ENCODE measurements at regions of chr2 and their contacts with region 1.

Region 1: GRCh38 chr2:69724540-69725159 is 17.3 kb upstream of the ANXA4 start:
- DNase-seq: peak; percentile 91
- H3K4me3 ChIP-seq: peak overlapping the region in 3 of 4 donors; percentile 16 to 25 (median 25)
- H3K27ac ChIP-seq: no peak overlapping the region
- H3K4me1 ChIP-seq: peaks cover 0 to 10% (median 4%) of the 10 kb centered on the region in 4 donors
- H3K27me3 ChIP-seq: no peaks in the 10 kb centered on the region
- CTCF ChIP-seq: peak; percentile 85 to 96 (median 95)
- EP300 ChIP-seq: no peak
- POLR2A ChIP-seq: no peak

Region 2: GRCh38 chr2:69554981-69555380 is 169.7 kb before region 1 on chr2:
- intact Hi-C with region 1: no loop called
- DNase-seq: no peak
- H3K4me3 ChIP-seq: no peak overlapping the region
- H3K27ac ChIP-seq: peak overlapping the region in 1 of 4 donors; percentile 22
- H3K4me1 ChIP-seq: peaks cover 0 to 6% (median 3%) of the 10 kb centered on the region in 4 donors
- H3K27me3 ChIP-seq: no peaks in the 10 kb centered on the region
- CTCF ChIP-seq: no peak
- EP300 ChIP-seq: no peak
- POLR2A ChIP-seq: no peak

Region 3: GRCh38 chr2:69741619-69742466 is 17.2 kb after region 1 on chr2 and contains the start of gene ANXA4:
- intact Hi-C with region 1: no loop called
- DNase-seq: peak; percentile 91
- H3K4me3 ChIP-seq: peak within 1 kb of the TSS; percentile 82 to 98 (median 86)
- H3K27ac ChIP-seq: peak within 1 kb of the TSS; percentile 89 to 98 (median 95)
- H3K4me1 ChIP-seq: peaks cover 0 to 19% (median 17%) of the 10 kb centered on the region in 4 donors
- H3K27me3 ChIP-seq: no peaks in the 10 kb centered on the region
- CTCF ChIP-seq: no peak
- EP300 ChIP-seq: no peak
- POLR2A ChIP-seq: peak; percentile 42 to 85
- total RNA-seq, gene ANXA4: 33.3 to 55.8 (median 44.5) TPM

Region 4: GRCh38 chr2:69816923-69817542 is 92.4 kb after region 1 on chr2:
- intact Hi-C with region 1: loop called (anchors 1 kb)
- DNase-seq: peak; percentile 90
- H3K4me3 ChIP-seq: no peak overlapping the region
- H3K27ac ChIP-seq: no peak overlapping the region
- H3K4me1 ChIP-seq: no peaks in the 10 kb centered on the region
- H3K27me3 ChIP-seq: no peaks in the 10 kb centered on the region
- CTCF ChIP-seq: peak; percentile 73 to 98 (median 94)
- EP300 ChIP-seq: no peak
- POLR2A ChIP-seq: no peak

Measured in sigmoid colon (tissue), 7 donors.